Transverse colon (tissue), 4 donors: ENCODE measurements at regions of chr16 and their contacts with region 1.

Region 1: DNA sequence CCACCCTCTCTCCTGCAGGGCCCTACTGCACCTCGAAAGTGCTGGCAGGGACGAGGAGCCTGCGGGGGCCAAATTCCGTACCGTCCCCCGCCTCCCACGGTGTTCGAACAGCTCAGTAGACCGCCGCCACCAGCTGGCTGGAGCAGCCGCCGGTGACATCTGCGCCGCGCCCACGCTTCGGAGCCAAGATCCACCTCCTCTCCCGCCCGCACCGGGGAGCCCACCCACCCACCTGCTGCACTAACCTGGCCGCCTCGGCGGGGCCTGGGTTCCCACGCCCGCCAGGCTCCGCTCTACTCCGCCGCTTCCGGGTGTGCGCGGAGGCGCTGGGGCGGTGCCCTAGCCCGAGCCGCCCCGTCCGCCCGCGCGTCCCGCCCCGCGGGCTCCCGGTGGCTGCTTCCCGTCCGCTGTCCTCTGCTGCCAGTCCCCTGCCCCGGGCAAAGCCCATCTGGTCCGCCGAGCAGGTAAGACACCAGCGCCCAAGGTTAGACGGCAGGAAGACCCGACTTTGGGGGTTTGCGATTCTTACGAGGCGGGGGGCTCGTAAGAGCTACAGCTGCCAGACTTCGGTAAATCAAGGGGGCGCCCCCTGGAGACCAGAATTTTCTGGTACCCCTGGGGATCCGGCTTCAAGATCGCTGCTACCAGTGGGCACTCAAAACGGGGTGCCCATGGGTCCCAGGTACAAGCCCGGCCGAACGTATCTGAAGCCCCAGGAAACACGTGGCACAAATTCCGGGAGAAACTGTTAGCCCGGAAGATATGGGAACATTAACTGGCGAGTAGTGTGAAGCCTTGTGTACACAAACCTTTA is at the starts of genes FBXL8 and TRADD:
- DNase-seq: peak; percentile 86
- H3K4me3 ChIP-seq: peak within 1 kb of the TSS; percentile 58 to 93 (median 82)
- H3K27ac ChIP-seq: peak within 1 kb of the TSS; percentile 90 to 93 (median 92)
- H3K4me1 ChIP-seq: peaks cover 12 to 75% (median 60%) of the 10 kb centered on the region in 4 donors
- H3K27me3 ChIP-seq: peaks cover 34% of the 10 kb centered on the region
- CTCF ChIP-seq: peak in 3 of 5 experiments; percentile 25 to 49 (median 29)
- EP300 ChIP-seq: no peak
- POLR2A ChIP-seq: peak; percentile 85
- total RNA-seq, gene FBXL8: 30.0 to 91.1 (median 55.1) TPM
- total RNA-seq, gene TRADD: 32.2 to 74.8 (median 42.0) TPM

Region 2: DNA sequence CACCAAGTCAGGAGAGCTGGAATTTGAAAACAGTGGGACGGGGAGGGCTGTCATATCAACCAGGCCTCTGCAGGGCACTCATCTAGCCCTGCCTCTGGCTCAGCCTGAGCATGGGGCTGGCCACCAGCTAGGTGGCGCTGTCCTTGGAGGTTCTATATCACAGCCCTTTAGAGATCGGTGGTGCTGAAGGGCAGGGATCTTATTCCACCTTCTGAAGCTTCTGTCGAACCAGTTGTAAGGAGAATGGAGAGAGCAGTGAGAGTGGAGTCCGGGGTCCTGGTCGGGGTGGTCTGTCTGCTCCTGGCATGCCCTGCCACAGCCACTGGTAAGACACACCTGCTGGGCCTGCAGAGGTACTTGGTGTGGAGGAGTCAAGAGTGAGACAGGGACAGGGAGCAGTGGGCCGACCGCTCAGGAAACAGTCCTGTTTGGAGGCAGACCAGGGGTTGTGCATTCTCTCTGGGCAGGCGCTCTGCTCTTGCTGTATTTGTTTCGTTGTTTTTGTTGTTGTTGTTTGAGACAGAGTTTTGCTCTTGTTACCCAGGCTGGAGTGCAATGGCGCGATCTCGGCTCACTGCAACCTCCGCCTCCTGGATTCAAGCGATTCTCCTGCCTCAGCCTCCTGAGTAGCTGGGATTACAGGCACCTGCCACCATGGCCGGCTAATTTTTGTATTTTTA is 198.6 kb before region 1 on chr16 and contains the start of gene CES3:
- in situ Hi-C with region 1: loop called in 1 of 4 experiments (anchors 25 kb)
- intact Hi-C with region 1: no loop called
- DNase-seq: peak; percentile 89
- H3K4me3 ChIP-seq: peak within 1 kb of the TSS in 3 of 4 donors; percentile 25 to 45 (median 33)
- H3K27ac ChIP-seq: peak within 1 kb of the TSS; percentile 81 to 88 (median 82)
- H3K4me1 ChIP-seq: peaks cover 0 to 53% (median 31%) of the 10 kb centered on the region in 4 donors
- H3K27me3 ChIP-seq: no peaks in the 10 kb centered on the region
- CTCF ChIP-seq: peak; percentile 58 to 93 (median 78)
- EP300 ChIP-seq: no peak
- POLR2A ChIP-seq: peak; percentile 71
- total RNA-seq, gene CES3: 247 to 616 (median 291) TPM

Region 3: GRCh38 chr16:66977341-66978113 is 182.3 kb before region 1 on chr16:
- in situ Hi-C with region 1: loop called in 2 of 4 experiments (anchors 25 kb)
- intact Hi-C with region 1: loop called (anchors 2 kb)
- DNase-seq: peak; percentile 94
- H3K4me3 ChIP-seq: no peak overlapping the region
- H3K27ac ChIP-seq: no peak overlapping the region
- H3K4me1 ChIP-seq: peaks cover 0 to 11% (median 0%) of the 10 kb centered on the region in 4 donors
- H3K27me3 ChIP-seq: no peaks in the 10 kb centered on the region
- CTCF ChIP-seq: peak; percentile 93 to 99 (median 97)
- EP300 ChIP-seq: no peak
- POLR2A ChIP-seq: peak; percentile 37

Region 4: GRCh38 chr16:67017810-67018488 is 141.9 kb before region 1 on chr16:
- in situ Hi-C with region 1: loop called in 1 of 4 experiments (anchors 10 kb)
- intact Hi-C with region 1: no loop called
- DNase-seq: peak; percentile 87
- H3K4me3 ChIP-seq: no peak overlapping the region
- H3K27ac ChIP-seq: no peak overlapping the region
- H3K4me1 ChIP-seq: peaks cover 4 to 17% (median 13%) of the 10 kb centered on the region in 4 donors
- H3K27me3 ChIP-seq: peaks cover 25% of the 10 kb centered on the region
- CTCF ChIP-seq: peak; percentile 47 to 90 (median 65)
- EP300 ChIP-seq: no peak
- POLR2A ChIP-seq: no peak

Region 5: GRCh38 chr16:67183627-67184328 is 24.0 kb after region 1 on chr16 and contains the start of gene MATCAP1:
- in situ Hi-C with region 1: no loop called
- intact Hi-C with region 1: loop called (anchors 2 kb)
- DNase-seq: peak; percentile 95
- H3K4me3 ChIP-seq: peak within 1 kb of the TSS; percentile 52 to 77 (median 70)
- H3K27ac ChIP-seq: peak within 1 kb of the TSS; percentile 93 to 96 (median 94)
- H3K4me1 ChIP-seq: peaks cover 13 to 37% (median 26%) of the 10 kb centered on the region in 4 donors
- H3K27me3 ChIP-seq: no peaks in the 10 kb centered on the region
- CTCF ChIP-seq: peak in 1 of 5 experiments; percentile 5
- EP300 ChIP-seq: peak; percentile 53
- POLR2A ChIP-seq: peak; percentile 77
- total RNA-seq, gene MATCAP1: 27.6 to 220 (median 32.5) TPM